ENCODE measurements at regions of chr9 and their contacts with region 1.

Region 1: GRCh38 chr9:126860077-126860756 is at the start of gene ZBTB34:
- DNase-seq: peak; percentile 81
- ATAC-seq: peak; percentile 81
- H3K4me3 Mint-ChIP-seq: peak within 1 kb of the TSS; percentile 76
- H3K27ac Mint-ChIP-seq: peak within 1 kb of the TSS; percentile 84
- H3K4me1 Mint-ChIP-seq: peaks cover 24% of the 10 kb centered on the region
- H3K27me3 Mint-ChIP-seq: peaks cover 23% of the 10 kb centered on the region
- total RNA-seq, gene ZBTB34: 7.4 to 7.5 TPM

Region 2: GRCh38 chr9:126690431-126691350 is 169.5 kb before region 1 on chr9:
- CTCF ChIA-PET with region 1: no interaction called
- DNase-seq: peak; percentile 71
- ATAC-seq: peak; percentile 79
- H3K4me3 Mint-ChIP-seq: no peak overlapping the region
- H3K27ac Mint-ChIP-seq: no peak overlapping the region
- H3K4me1 Mint-ChIP-seq: no peaks in the 10 kb centered on the region
- H3K27me3 Mint-ChIP-seq: peaks cover 21% of the 10 kb centered on the region

Region 3: DNA sequence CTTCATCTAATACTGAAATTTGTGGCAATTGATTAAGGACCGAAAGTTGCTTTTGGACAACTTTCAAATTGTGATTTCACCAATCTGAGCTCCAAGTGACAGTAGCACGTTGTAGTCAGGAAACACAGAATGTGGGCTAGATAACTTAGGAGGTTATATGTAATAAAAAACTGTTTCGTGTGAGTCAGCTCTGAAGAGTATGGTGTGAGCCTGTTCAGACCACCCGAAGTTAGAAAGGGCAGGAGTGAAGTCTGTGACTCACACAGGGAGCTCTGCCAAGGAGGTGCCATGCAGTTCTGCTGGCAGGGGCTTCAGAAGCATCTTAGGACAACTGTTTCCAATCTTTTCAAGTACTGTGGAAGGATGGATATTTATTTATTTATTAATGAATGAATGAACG is 16.1 kb before region 1 on chr9:
- CTCF ChIA-PET with region 1: interaction called, 17 read pairs
- DNase-seq: no peak
- ATAC-seq: no peak
- H3K4me3 Mint-ChIP-seq: no peak overlapping the region
- H3K27ac Mint-ChIP-seq: no peak overlapping the region
- H3K4me1 Mint-ChIP-seq: peaks cover 12% of the 10 kb centered on the region
- H3K27me3 Mint-ChIP-seq: peaks cover under 1% of the 10 kb centered on the region

Region 4: DNA sequence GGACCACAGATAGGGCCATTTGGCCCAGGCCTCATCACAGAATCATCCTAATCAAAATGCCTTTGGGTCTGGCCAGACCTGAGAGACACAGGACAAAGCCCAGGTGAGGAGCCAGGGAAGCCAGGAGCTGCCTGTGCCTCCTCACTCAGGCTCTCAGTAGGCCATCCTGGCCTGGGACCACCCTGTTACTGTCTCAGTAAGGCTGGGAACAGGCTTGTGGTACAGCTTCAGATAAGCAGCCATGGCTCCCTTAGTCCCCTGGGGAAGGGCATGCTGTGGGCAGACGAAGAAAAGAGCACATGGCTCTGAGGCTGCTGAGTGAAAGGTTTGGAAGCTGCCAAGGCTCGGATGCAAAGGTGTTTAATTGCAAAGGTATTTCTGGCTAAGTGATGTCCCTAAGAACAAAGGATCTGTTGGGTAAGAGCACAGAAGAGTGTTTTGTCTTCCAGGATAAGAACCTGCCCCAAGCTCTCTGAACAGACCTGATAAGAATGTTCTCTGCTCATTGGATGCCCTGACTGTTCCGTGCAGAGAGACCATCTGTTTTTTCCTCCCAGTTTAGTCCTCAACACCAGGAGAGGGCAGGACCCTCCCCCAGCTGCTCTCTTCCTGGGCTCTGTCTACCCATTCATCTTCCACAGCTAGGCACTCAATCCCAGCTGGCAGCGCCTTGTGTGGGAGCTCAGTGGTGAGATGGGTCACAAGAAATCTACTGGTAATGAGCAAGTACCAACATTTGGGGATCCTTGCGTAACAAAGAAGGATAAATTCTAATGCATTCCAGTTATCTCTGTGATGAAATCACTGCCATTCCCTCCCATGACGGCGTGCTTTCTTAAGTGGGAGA is 244.5 kb after region 1 on chr9:
- CTCF ChIA-PET with region 1: no interaction called
- DNase-seq: no peak
- ATAC-seq: no peak
- H3K4me3 Mint-ChIP-seq: no peak overlapping the region
- H3K27ac Mint-ChIP-seq: no peak overlapping the region
- H3K4me1 Mint-ChIP-seq: no peaks in the 10 kb centered on the region
- H3K27me3 Mint-ChIP-seq: no peaks in the 10 kb centered on the region